Left ventricle myocardium superior (tissue), 1 donor: ENCODE measurements at regions of chr22 and their contacts with region 1.

Region 1: DNA sequence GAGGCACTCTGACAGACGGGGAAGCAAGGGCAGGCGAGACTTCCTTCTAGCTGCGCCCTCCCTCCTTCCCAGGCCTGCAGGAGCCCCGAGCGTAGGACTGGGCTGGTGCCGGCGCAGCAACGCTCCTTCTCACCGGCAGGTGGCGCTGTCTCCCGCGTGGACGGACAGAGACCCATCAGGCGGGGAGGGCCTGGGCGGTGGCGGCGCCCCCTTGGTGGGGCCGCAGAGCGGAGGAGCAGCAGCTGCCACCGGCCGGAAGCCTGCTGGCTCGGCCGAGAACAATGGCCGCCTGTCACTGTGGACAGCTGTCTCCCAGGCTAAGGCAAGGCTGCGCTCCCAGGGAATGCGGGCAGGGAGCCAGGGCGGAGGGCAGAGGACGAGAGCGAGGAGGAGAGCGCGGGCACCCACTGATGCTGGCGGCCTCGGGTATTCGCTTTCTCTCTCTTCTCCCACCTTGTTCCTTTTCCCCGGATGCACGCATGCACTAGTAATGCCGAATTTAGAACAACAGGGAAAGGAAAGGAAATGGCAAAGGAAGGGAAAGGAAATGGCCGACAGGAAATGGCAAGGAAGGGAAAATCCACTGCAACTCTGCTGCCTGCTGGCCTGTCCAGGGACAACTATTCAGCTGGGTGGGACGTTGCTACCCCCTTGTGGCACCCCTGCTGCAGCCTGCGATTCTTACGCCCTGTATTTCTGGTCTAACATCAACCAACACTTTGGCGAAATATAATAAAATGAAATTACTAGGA is 14.4 kb downstream of the PPM1F start:
- DNase-seq: peak; percentile 96
- ATAC-seq: peak; percentile 92

Region 2: GRCh38 chr22:21712894-21713712 is 225.1 kb before region 1 on chr22:
- intact Hi-C with region 1: loop called (anchors 2 kb)
- DNase-seq: peak; percentile 69
- ATAC-seq: peak; percentile 93

Region 3: DNA sequence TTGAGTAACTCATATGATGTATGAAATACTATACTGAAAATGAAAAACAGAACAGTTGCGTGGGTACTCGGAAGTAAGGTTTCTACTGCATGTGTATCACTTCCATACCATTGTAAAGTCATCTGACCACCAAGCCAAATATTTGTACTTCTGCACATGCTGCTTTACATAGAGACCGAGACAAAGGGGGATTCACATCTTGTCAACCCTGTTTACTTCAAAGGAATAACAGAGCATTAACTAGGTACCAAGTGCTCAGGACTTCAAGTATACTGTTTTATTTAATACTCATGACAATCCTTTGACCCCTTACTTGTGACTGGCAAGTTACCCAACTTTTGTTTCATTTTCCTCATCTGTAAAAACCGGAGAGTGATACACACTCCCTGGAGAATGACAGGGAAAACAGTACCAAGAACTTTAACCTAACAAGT is 80.7 kb before region 1 on chr22:
- intact Hi-C with region 1: no loop called
- DNase-seq: no peak
- ATAC-seq: no peak

Region 4: DNA sequence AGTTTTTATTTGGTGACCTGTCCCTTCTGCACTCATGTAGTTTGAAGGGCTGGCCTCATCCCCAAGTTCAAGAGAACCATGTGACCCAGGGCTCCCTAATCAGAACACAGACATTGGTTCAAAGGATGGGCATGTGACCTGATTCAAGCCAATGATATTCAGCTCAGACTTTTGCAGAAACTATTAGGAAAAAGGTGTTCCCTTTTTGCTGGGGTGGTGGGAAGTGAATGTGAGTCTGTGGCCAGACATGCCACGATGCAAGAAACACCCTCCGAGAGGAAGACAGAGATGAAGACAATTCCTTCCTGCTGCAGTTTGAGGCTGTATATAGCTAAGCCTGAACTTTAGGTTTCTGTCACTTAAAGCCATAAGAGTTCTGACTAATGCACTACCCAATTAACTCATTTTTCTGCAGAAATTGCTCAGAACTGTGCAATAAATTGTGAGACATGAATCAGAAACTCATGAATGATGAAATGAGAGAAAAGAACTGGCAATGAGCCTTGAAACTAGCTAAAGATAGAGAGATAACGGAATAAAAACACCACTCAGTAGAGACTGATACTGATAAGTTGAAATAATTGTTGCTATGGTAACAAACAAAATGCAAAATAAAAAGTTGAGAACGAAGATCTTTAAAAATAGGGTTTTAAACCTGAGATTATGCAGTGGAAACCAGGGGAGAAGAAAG is 61.6 kb before region 1 on chr22:
- intact Hi-C with region 1: loop called (anchors 5 kb)
- DNase-seq: no peak
- ATAC-seq: no peak